ENCODE measurements at regions of chr7 and their contacts with region 1.

Region 1: DNA sequence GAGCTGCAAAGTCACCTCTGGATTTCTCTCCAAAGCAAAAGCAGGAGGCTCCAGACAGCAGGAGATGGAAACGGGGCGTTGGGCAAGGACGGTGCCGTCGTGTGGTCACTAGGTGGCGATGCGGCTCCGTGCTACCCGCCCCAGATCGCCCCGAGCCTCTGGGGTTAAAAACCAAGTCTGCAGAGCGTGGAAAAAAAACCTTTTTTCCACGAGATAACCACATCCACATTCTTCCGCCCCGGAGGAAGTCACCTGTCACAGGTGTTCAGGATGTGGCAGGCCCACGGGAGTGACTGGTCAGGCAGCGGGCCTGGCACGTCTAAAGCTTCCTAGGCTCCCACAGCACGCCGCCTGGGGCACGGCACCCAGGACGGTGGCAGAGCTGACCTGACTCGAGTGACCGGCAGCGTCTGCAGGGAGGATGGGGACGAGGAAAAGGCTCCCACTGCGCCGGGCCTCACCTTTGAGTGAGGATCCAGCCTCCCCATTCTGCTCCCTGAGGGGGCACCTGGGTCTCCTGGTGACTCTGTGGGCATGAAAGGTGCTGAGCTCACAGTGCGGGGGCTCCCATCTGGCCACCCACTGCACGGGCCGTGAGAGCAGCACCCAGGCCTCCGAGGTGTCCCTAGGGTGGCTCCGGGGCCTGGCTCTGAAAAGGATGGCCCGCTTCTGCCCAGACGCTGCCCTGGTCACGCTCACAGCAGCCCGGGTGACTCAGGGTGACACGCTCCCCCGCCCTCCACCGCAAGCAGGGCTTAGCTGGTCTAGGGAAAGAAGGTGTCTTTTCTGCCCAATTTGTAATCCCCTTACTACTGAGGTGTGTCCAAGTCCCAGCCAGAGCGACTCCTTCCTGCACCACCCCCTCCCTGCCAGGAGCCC is 71.3 kb upstream of the TNRC18 start:
- DNase-seq: peak; percentile 90
- ATAC-seq: peak; percentile 91
- H3K4me3 Mint-ChIP-seq: no peak overlapping the region
- H3K27ac Mint-ChIP-seq: no peak overlapping the region
- H3K4me1 Mint-ChIP-seq: peaks cover 25% of the 10 kb centered on the region
- H3K27me3 Mint-ChIP-seq: no peaks in the 10 kb centered on the region

Region 2: GRCh38 chr7:4973728-4974198 is 521.2 kb before region 1 on chr7:
- CTCF ChIA-PET with region 1: no interaction called
- POLR2A ChIA-PET with region 1: no interaction called
- intact Hi-C with region 1: no loop called
- DNase-seq: peak; percentile 96
- ATAC-seq: peak; percentile 98
- H3K4me3 Mint-ChIP-seq: peak overlapping the region; percentile 97
- H3K27ac Mint-ChIP-seq: peak overlapping the region; percentile 92
- H3K4me1 Mint-ChIP-seq: peaks cover 31% of the 10 kb centered on the region
- H3K27me3 Mint-ChIP-seq: no peaks in the 10 kb centered on the region

Region 3: DNA sequence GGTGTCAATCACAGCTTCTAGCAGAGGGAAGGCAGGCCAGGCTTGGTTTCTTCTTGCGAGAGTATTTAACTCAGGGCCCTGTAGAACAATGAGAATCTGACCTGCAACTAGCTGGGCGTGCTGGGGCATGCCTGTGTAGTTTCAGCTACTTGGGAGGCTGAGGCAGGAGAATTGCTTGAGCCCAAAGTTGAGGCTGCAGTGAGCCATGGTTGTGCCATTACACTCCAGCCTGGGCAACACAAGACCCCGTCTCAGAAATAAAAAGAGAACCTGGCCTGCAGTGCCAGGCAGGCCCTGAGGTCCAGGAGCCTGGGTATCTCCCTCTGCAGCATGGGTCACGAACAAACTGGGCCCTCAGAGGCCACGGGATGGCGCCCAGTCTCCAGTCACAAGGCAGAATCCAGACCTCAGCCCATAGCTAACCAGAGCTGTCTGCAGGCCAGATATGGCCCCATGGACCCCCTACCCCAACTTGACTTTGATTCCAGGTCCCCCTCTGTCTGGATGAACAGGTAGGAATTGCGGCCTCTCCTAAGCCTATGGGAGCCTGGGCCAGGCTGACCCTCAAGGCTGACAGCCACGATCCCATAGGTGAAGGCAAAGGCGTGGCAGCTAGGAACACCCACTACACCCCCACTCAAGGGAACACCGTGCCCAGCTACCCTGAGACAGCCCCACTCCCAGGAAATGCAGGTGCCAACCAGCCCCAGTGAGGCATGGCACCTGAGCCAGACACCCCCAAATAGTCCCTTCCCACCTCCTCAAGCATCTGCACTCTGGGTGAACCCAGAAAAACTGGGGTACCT is 31.4 kb after region 1 on chr7:
- CTCF ChIA-PET with region 1: interaction called, 12 read pairs
- POLR2A ChIA-PET with region 1: no interaction called
- intact Hi-C with region 1: no loop called
- DNase-seq: peak; percentile 61
- ATAC-seq: peak; percentile 1
- H3K4me3 Mint-ChIP-seq: peak overlapping the region; percentile 100
- H3K27ac Mint-ChIP-seq: peak overlapping the region; percentile 79
- H3K4me1 Mint-ChIP-seq: peaks cover 16% of the 10 kb centered on the region
- H3K27me3 Mint-ChIP-seq: no peaks in the 10 kb centered on the region

Region 4: DNA sequence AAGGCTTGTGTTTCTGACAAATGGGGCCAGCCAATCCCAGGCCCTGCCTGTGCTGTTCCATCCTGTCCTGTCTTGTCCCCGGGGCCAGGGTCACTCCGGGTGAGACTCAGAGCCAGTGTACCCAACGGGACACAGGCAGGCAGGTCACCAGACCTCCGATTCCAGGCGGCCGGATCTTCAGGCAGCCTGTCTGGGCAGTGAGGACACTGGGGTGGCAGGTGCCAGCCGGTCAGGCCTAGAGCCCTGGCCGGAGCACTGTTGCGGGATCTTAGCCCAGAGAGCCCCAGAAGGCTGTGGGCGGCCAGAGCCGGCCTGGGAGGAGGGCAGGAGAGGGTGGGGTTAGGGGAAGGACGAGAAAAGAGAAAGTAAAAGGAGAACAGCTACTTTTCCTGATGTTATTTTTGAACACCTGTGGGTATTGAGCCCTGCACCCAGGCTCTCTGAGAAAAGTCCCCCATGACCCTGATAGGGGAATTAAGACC is 63.0 kb after region 1 on chr7:
- CTCF ChIA-PET with region 1: interaction called, 4 read pairs
- POLR2A ChIA-PET with region 1: no interaction called
- intact Hi-C with region 1: loop called (anchors 1 kb)
- DNase-seq: peak; percentile 45
- ATAC-seq: no peak
- H3K4me3 Mint-ChIP-seq: peak overlapping the region; percentile 65
- H3K27ac Mint-ChIP-seq: peak overlapping the region; percentile 88
- H3K4me1 Mint-ChIP-seq: peaks cover 39% of the 10 kb centered on the region
- H3K27me3 Mint-ChIP-seq: peaks cover 2% of the 10 kb centered on the region

Region 5: DNA sequence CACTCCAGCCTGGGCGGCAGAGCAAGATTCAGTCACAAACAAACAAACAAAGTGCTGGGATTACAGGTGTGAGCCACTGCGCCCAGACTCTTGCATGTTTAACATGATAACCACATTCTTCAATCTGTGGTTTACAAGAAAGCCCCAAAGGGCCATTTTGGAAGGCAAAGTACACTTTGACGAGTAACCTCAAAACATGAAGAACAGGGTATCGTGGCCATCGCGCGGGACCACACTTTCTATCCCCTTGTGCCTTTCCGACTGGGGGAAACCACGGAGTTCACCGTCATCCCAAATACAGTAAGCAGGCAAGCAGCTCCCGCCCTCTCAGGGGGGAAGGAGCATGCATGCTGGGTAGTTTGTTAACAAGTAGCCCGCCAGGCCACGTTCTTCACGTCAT is 161.3 kb after region 1 on chr7:
- CTCF ChIA-PET with region 1: interaction called, 10 read pairs
- POLR2A ChIA-PET with region 1: no interaction called
- intact Hi-C with region 1: no loop called
- DNase-seq: no peak
- ATAC-seq: no peak
- H3K4me3 Mint-ChIP-seq: no peak overlapping the region
- H3K27ac Mint-ChIP-seq: no peak overlapping the region
- H3K4me1 Mint-ChIP-seq: peaks cover 4% of the 10 kb centered on the region
- H3K27me3 Mint-ChIP-seq: no peaks in the 10 kb centered on the region

Region 6: DNA sequence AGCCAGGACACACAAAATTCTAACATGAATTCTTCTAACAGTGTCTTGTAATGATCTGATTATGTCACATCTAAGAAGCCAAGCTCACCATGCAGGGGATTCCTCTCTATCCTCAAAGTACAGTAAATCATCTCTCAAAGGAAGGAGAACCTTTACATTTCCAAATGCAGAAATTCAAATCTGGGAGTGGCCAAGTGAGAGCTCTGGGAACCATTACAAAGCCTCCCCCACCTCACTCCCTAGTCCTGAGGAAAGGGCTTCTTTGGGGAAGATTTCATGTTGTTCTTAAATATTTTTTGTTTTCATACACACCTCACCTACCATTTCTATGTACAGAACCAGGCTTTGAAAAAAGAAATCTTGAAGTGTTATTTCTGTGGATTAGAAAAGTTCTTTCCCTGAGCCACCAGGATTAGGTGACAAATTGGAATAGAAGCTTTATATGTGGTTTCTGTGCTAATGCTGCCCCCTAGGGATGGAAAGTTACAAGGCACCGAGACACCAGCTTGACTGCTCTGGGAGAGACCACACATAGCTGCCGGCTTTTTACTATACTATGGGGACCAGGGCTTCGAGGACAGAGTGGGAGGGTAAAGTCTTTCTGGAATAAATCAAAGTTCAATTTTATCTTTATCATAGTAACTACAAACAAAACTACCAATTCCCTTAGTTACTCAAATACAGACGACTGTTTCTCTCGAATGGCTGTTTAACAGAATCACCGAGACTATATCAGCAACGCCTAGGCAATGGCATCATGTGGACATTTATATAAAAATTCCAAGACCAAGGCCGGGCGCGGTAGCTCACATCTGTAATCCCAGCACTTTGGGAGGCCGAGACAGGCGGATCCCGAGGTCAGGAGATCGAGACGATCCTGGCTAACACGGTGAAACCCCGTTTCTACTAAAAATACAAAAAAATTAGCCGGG is 170.4 kb after region 1 on chr7:
- CTCF ChIA-PET with region 1: interaction called, 46 read pairs
- POLR2A ChIA-PET with region 1: interaction called, 3 read pairs
- intact Hi-C with region 1: loop called (anchors 1 kb)
- DNase-seq: peak; percentile 74
- ATAC-seq: peak; percentile 82
- H3K4me3 Mint-ChIP-seq: no peak overlapping the region
- H3K27ac Mint-ChIP-seq: no peak overlapping the region
- H3K4me1 Mint-ChIP-seq: peaks cover 24% of the 10 kb centered on the region
- H3K27me3 Mint-ChIP-seq: no peaks in the 10 kb centered on the region

Region 7: GRCh38 chr7:5677538-5678294 is 182.8 kb after region 1 on chr7:
- CTCF ChIA-PET with region 1: interaction called, 4 read pairs
- POLR2A ChIA-PET with region 1: no interaction called
- intact Hi-C with region 1: loop called in 1 of 2 experiments (anchors 1 kb)
- DNase-seq: peak; percentile 73
- ATAC-seq: peak; percentile 63
- H3K4me3 Mint-ChIP-seq: no peak overlapping the region
- H3K27ac Mint-ChIP-seq: peak overlapping the region; percentile 27
- H3K4me1 Mint-ChIP-seq: peaks cover 44% of the 10 kb centered on the region
- H3K27me3 Mint-ChIP-seq: no peaks in the 10 kb centered on the region

Region 8: DNA sequence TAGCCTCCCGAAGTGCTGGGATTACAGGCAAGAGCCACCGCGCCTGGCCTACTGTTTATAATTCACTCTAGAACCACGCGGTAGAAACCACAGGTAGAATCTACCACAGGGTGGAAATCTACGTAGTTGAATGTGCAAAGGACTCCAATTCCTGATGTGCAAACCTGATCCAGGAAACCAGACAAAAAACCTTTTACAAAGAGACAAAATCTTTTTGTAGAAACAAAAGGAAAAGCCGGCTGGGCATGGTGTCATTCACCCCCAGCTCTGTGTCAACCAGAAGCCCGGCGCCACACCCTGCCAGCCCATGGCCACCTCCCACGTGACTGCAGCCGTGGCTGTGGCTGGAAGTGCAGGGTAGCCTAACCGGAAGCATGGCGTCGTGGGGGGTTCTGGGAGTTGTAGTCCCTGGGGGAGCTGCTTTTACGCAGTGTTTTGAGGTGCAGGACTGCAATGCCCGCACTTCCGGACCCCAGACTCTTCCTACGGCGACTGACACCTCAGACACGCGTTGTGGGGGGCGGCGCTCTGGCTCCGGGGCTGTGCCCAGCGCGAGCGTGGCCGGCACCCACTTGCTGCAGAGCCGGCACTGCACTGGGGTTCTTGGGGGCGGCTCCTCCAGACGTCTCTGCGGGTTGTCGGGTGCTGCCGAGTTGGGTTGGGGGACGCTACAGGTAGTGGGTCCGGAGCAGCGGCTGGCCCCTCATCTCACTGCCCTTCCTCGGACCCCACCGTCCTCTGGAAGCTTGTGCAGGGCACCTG is 328.0 kb after region 1 on chr7:
- CTCF ChIA-PET with region 1: interaction called, 3 read pairs
- POLR2A ChIA-PET with region 1: no interaction called
- intact Hi-C with region 1: loop called in 1 of 2 experiments (anchors 2 kb)
- DNase-seq: peak; percentile 99
- ATAC-seq: peak; percentile 94
- H3K4me3 Mint-ChIP-seq: peak overlapping the region; percentile 74
- H3K27ac Mint-ChIP-seq: peak overlapping the region; percentile 89
- H3K4me1 Mint-ChIP-seq: peaks cover 29% of the 10 kb centered on the region
- H3K27me3 Mint-ChIP-seq: no peaks in the 10 kb centered on the region

Measured in activated CD4-positive, alpha-beta T cell treated with anti-CD3 and anti-CD28 coated beads for 36 hours (primary cell).